Prostate gland (tissue), 2 donors: ENCODE measurements at regions of chr14 and their contacts with region 1.

Region 1: GRCh38 chr14:104137297-104138097 is 890 bp upstream of the KIF26A start:
- DNase-seq: no peak
- H3K4me3 ChIP-seq: peak overlapping the region; percentile 30 to 39
- H3K27ac ChIP-seq: no peak overlapping the region
- H3K4me1 ChIP-seq: peaks cover 4% of the 10 kb centered on the region
- H3K27me3 ChIP-seq: peaks cover 27% of the 10 kb centered on the region
- CTCF ChIP-seq: peak; percentile 95 to 96 (median 95)
- POLR2A ChIP-seq: no peak

Region 2: DNA sequence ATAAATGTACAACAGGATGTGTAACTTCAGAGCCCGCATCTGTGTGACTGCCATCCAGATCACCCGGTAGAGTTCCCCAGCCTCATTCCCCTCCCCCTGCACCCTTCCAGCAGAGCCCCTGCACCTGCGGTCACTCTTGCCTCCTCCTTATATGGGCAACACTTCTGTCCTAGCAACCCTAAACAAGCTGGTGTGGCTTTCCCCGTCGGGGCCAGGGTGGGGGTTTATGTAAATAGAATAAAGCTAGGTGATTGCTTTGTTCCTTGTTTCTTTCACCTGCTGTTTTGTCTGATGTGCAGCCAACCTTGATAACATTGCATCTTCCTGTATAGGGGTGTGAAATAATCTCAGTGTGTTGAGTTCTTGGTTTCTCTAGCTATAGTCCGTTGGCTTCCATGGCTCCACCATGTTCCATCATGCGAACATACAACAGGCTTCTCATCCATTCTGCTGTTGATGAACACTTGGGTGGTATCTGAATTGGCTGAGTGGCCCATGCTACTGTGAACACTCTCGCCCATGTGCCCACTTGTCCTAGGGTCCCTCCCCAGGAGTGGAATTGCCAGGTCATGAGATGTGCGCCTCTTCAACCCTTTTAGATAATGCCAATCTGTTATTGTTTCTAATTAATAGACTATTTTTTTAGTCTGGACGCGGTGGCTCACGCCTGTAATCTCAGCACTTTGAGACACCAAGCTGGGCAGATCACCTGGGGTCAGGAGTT is 103.1 kb after region 1 on chr14:
- intact Hi-C with region 1: no loop called
- DNase-seq: no peak
- H3K4me3 ChIP-seq: no peak overlapping the region
- H3K27ac ChIP-seq: no peak overlapping the region
- H3K4me1 ChIP-seq: no peaks in the 10 kb centered on the region
- H3K27me3 ChIP-seq: peaks cover 4% of the 10 kb centered on the region
- CTCF ChIP-seq: no peak
- POLR2A ChIP-seq: no peak

Region 3: GRCh38 chr14:104370256-104370870 is 232.9 kb after region 1 on chr14:
- intact Hi-C with region 1: loop called (anchors 10 kb)
- DNase-seq: peak; percentile 16
- H3K4me3 ChIP-seq: no peak overlapping the region
- H3K27ac ChIP-seq: no peak overlapping the region
- H3K4me1 ChIP-seq: no peaks in the 10 kb centered on the region
- H3K27me3 ChIP-seq: peaks cover 13% of the 10 kb centered on the region
- CTCF ChIP-seq: peak in 3 of 4 experiments; percentile 30 to 66 (median 39)
- POLR2A ChIP-seq: no peak

Region 4: GRCh38 chr14:104563742-104564615 is 426.5 kb after region 1 on chr14:
- intact Hi-C with region 1: loop called (anchors 2 kb)
- DNase-seq: peak; percentile 67
- H3K4me3 ChIP-seq: no peak overlapping the region
- H3K27ac ChIP-seq: no peak overlapping the region
- H3K4me1 ChIP-seq: no peaks in the 10 kb centered on the region
- H3K27me3 ChIP-seq: peaks cover 34% of the 10 kb centered on the region
- CTCF ChIP-seq: peak; percentile 75 to 89 (median 84)
- POLR2A ChIP-seq: no peak

Region 5: GRCh38 chr14:104639889-104640548 is 502.5 kb after region 1 on chr14:
- intact Hi-C with region 1: loop called (anchors 5 kb)
- DNase-seq: peak; percentile 24
- H3K4me3 ChIP-seq: no peak overlapping the region
- H3K27ac ChIP-seq: no peak overlapping the region
- H3K4me1 ChIP-seq: no peaks in the 10 kb centered on the region
- H3K27me3 ChIP-seq: no peaks in the 10 kb centered on the region
- CTCF ChIP-seq: peak; percentile 56 to 81 (median 76)
- POLR2A ChIP-seq: no peak